Heart right ventricle (tissue), 16 donors: ENCODE measurements at regions of chr1 and their contacts with region 1.

Region 1: GRCh38 chr1:993379-993995 is 6.4 kb downstream of the HES4 start:
- DNase-seq: no peak
- ATAC-seq: no peak
- H3K4me3 ChIP-seq: no peak overlapping the region
- H3K27ac ChIP-seq: no peak overlapping the region
- H3K4me1 ChIP-seq: peaks cover 0 to 19% (median 12%) of the 10 kb centered on the region in 9 donors
- H3K27me3 ChIP-seq: peaks cover 0 to 46% (median 0%) of the 10 kb centered on the region in 7 donors
- CTCF ChIP-seq: no peak

Region 2: DNA sequence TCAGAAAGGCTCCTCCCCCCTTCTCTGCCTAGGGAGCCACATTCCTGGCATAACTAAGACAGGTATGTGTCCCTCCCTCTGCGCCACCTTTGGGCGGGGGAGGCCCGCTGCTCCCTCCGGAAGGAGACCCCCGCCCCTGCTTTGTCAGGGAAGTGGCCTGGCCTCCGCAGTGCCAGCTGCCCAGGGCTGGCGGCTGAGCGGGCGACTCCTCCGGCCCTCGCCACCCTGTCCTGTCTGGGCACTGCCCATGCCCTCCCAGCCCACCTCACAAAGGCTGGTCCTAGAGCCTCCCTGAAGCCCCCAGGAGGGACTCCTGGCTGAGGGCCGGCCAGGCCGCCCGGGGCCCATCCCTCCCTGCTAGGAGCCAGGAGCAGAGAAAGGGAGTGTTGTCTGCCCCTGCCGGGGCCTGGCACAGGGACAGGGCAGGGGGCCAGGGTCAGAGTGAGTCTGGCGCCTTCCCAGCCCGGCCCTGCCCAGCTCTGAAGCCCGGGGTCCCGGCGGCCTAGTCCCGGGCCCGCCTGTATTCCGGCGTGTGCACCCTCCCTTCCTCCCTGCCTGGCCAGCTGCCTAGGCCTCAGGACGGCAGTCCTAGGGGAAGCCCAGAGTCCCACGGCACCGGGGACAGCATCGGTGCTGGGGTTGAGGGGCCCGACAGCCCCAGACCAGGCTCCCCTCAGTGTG is 31.4 kb after region 1 on chr1:
- intact Hi-C with region 1: loop called in 1 of 10 experiments (anchors 5 kb)
- DNase-seq: no peak
- ATAC-seq: peak in 7 of 8 donors; percentile 3 to 61 (median 45)
- H3K4me3 ChIP-seq: peak overlapping the region in 6 of 10 donors; percentile 5 to 29 (median 20)
- H3K27ac ChIP-seq: peak overlapping the region in 6 of 10 donors; percentile 37 to 49 (median 42)
- H3K4me1 ChIP-seq: peaks cover 21 to 68% (median 36%) of the 10 kb centered on the region in 9 donors
- H3K27me3 ChIP-seq: peaks cover 0 to 39% (median 0%) of the 10 kb centered on the region in 7 donors
- CTCF ChIP-seq: no peak